ENCODE measurements at regions of chr12 and their contacts with region 1.

Region 1: GRCh38 chr12:49088190-49088931 is 6.2 kb downstream of the DHH start:
- DNase-seq: peak; percentile 94
- ATAC-seq: peak; percentile 99
- H3K4me3 ChIP-seq: peak overlapping the region; percentile 7 to 33; a peak in 2 of 4 replicates
- H3K27ac ChIP-seq: no peak overlapping the region
- H3K4me1 ChIP-seq: peaks cover 11 to 16% of the 10 kb centered on the region in 2 experiments
- H3K27me3 ChIP-seq: no peaks in the 10 kb centered on the region
- CTCF ChIP-seq: peak; percentile 83 to 92 (median 89)
- POLR2A ChIP-seq: no peak
- RAD21 ChIP-seq: peak; percentile 76

Region 2: GRCh38 chr12:48788854-48789796 is 299.2 kb before region 1 on chr12 and contains the start of gene ADCY6:
- CTCF ChIA-PET with region 1: no interaction called
- POLR2A ChIA-PET with region 1: no interaction called
- RAD21 ChIA-PET with region 1: no interaction called
- intact Hi-C with region 1: no loop called
- DNase-seq: peak; percentile 29
- ATAC-seq: peak; percentile 81
- H3K4me3 ChIP-seq: peak within 1 kb of the TSS; percentile 80 to 90
- H3K27ac ChIP-seq: peak within 1 kb of the TSS; percentile 72
- H3K4me1 ChIP-seq: peaks cover 14 to 25% of the 10 kb centered on the region in 2 experiments
- H3K27me3 ChIP-seq: no peaks in the 10 kb centered on the region
- CTCF ChIP-seq: no peak
- POLR2A ChIP-seq: no peak
- RAD21 ChIP-seq: no peak
- total RNA-seq, gene ADCY6: 24.9 TPM

Region 3: GRCh38 chr12:49069507-49070346 is 18.6 kb before region 1 on chr12 and contains the start of gene RHEBL1:
- CTCF ChIA-PET with region 1: interaction called, 34 read pairs
- POLR2A ChIA-PET with region 1: interaction called, 7 read pairs
- RAD21 ChIA-PET with region 1: interaction called, 3 to 6 read pairs
- intact Hi-C with region 1: loop called (anchors 1 kb)
- DNase-seq: peak; percentile 90
- ATAC-seq: peak; percentile 99
- H3K4me3 ChIP-seq: peak within 1 kb of the TSS; percentile 70 to 71
- H3K27ac ChIP-seq: peak within 1 kb of the TSS; percentile 70
- H3K4me1 ChIP-seq: peaks cover 5 to 15% of the 10 kb centered on the region in 2 experiments
- H3K27me3 ChIP-seq: no peaks in the 10 kb centered on the region
- CTCF ChIP-seq: peak in 2 of 3 experiments; percentile 10 to 25; a peak in 1 of 6 replicates
- POLR2A ChIP-seq: no peak
- RAD21 ChIP-seq: no peak
- total RNA-seq, gene RHEBL1: 2.8 TPM

Region 4: DNA sequence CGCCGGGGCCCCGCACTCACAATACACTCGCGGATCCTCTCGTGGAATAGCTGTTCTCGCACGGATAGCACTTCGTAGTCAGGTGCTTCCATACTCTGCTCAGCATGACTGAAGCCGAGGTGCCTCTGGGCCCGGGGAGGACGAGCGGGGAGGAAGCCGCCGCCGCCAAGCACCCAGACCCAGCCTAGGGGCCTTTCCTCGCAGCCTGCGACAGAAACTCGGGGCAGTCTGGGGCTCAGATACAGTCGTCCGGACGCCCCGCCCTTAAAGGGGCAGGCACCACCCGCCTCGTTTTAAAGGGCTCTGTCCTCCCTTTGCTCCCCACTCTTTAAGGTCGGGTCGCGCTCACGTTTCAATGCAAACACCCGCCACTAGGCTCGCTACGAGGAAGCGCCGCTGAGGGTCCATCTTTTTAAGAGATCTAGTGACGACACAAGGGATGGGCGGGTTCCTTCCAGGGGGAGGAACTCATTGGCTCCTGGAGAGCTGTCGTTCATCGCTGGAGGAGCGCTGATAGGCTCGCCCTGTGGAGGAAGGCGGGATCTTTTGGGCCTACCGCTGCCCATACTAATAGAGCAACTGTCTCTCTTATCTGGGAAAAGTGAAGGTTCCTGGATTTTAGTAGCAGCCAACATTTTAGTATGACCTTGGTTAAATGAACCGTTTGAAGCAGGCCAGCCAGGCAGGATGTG is 22.2 kb after region 1 on chr12 and contains the start of gene LMBR1L:
- CTCF ChIA-PET with region 1: interaction called, 27 read pairs
- POLR2A ChIA-PET with region 1: interaction called, 10 read pairs
- RAD21 ChIA-PET with region 1: no interaction called
- intact Hi-C with region 1: no loop called
- DNase-seq: peak; percentile 96
- ATAC-seq: peak; percentile 98
- H3K4me3 ChIP-seq: peak within 1 kb of the TSS; percentile 90 to 97
- H3K27ac ChIP-seq: peak within 1 kb of the TSS; percentile 62
- H3K4me1 ChIP-seq: peaks cover 6 to 29% of the 10 kb centered on the region in 2 experiments; a peak in 3 of 4 replicates
- H3K27me3 ChIP-seq: no peaks in the 10 kb centered on the region
- CTCF ChIP-seq: peak in 2 of 3 experiments; percentile 20 to 50; a peak in 3 of 6 replicates
- POLR2A ChIP-seq: peak; percentile 63
- RAD21 ChIP-seq: no peak
- total RNA-seq, gene LMBR1L: 44.4 TPM

Region 5: GRCh38 chr12:49121047-49121696 is 32.8 kb after region 1 on chr12:
- CTCF ChIA-PET with region 1: interaction called, 57 read pairs
- POLR2A ChIA-PET with region 1: interaction called, 3 read pairs
- RAD21 ChIA-PET with region 1: interaction called in 1 of 2 experiments, 12 read pairs
- intact Hi-C with region 1: loop called (anchors 1 kb)
- DNase-seq: peak; percentile 69
- ATAC-seq: peak; percentile 95
- H3K4me3 ChIP-seq: no peak overlapping the region
- H3K27ac ChIP-seq: no peak overlapping the region
- H3K4me1 ChIP-seq: peaks cover 2 to 7% of the 10 kb centered on the region in 2 experiments; a peak in 1 of 4 replicates
- H3K27me3 ChIP-seq: no peaks in the 10 kb centered on the region
- CTCF ChIP-seq: peak; percentile 70 to 79 (median 77); a peak in 5 of 6 replicates
- POLR2A ChIP-seq: no peak
- RAD21 ChIP-seq: peak; percentile 86

Region 6: GRCh38 chr12:49170924-49171323 is 82.6 kb after region 1 on chr12:
- CTCF ChIA-PET with region 1: no interaction called
- POLR2A ChIA-PET with region 1: no interaction called
- RAD21 ChIA-PET with region 1: no interaction called
- intact Hi-C with region 1: no loop called
- DNase-seq: no peak
- ATAC-seq: no peak
- H3K4me3 ChIP-seq: no peak overlapping the region
- H3K27ac ChIP-seq: no peak overlapping the region
- H3K4me1 ChIP-seq: no peaks in the 10 kb centered on the region
- H3K27me3 ChIP-seq: no peaks in the 10 kb centered on the region
- CTCF ChIP-seq: no peak
- POLR2A ChIP-seq: no peak
- RAD21 ChIP-seq: no peak

Region 7: GRCh38 chr12:49232940-49233841 is 144.8 kb after region 1 on chr12:
- CTCF ChIA-PET with region 1: interaction called, 15 read pairs
- POLR2A ChIA-PET with region 1: no interaction called
- RAD21 ChIA-PET with region 1: no interaction called
- intact Hi-C with region 1: no loop called
- DNase-seq: no peak
- ATAC-seq: no peak
- H3K4me3 ChIP-seq: no peak overlapping the region
- H3K27ac ChIP-seq: no peak overlapping the region
- H3K4me1 ChIP-seq: peaks cover 4 to 17% of the 10 kb centered on the region in 2 experiments; a peak in 3 of 4 replicates
- H3K27me3 ChIP-seq: no peaks in the 10 kb centered on the region
- CTCF ChIP-seq: no peak
- POLR2A ChIP-seq: no peak
- RAD21 ChIP-seq: no peak

Region 8: DNA sequence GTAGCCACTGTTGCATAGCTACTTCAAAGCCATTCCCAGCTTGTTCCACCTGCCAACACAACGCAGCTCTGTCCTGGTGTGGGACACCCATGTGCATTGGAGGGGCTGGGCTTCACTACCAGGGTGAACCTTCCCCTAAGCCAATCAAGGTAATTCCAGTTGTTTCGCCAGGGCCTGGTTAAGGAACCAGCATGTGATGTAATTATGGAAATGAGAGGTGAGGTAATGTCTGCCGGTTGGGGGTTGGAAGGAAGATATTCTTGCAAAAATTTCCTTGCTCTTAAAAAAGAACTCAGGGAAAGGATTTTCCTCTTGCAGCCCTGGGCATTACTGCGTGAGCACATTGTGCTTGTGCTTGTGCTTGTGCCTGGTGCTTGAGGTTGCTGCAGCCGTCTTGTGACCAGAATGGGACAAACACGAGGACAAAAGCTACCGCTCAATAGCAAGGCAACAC is 191.4 kb after region 1 on chr12:
- CTCF ChIA-PET with region 1: no interaction called
- POLR2A ChIA-PET with region 1: no interaction called
- RAD21 ChIA-PET with region 1: no interaction called
- intact Hi-C with region 1: no loop called
- DNase-seq: no peak
- ATAC-seq: no peak
- H3K4me3 ChIP-seq: no peak overlapping the region
- H3K27ac ChIP-seq: no peak overlapping the region
- H3K4me1 ChIP-seq: peaks cover 0 to 5% of the 10 kb centered on the region in 2 experiments; a peak in 2 of 4 replicates
- H3K27me3 ChIP-seq: no peaks in the 10 kb centered on the region
- CTCF ChIP-seq: no peak
- POLR2A ChIP-seq: no peak
- RAD21 ChIP-seq: no peak

Measured in HCT116 (cell line).